ENCODE measurements at regions of chr9 and their contacts with region 1.

Region 1: DNA sequence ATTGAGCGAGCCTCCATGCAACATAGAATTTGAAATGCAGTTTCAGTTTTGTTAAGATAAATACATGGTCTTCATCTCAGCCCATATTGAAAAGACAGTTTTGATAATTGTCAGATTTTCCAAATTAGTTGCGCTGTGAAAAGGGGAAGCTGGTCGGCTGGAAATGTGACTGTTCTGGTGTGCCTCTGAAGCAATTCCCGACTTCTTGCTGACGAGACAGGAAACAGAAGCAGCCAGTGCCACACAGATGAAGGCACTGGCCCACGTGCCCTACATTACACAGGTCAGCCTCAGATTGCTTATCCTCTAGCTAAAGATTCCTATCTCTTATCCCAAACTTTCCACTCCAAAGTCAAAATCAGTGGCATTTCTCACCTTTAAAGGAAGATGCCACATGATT is 214.1 kb upstream of the TLE4 start:
- DNase-seq: no peak
- ATAC-seq: no peak
- H3K4me3 Mint-ChIP-seq: no peak overlapping the region
- H3K27ac Mint-ChIP-seq: no peak overlapping the region
- H3K4me1 Mint-ChIP-seq: peaks cover 3% of the 10 kb centered on the region
- H3K27me3 Mint-ChIP-seq: peaks cover 12% of the 10 kb centered on the region
- CTCF ChIP-seq: no peak

Region 2: DNA sequence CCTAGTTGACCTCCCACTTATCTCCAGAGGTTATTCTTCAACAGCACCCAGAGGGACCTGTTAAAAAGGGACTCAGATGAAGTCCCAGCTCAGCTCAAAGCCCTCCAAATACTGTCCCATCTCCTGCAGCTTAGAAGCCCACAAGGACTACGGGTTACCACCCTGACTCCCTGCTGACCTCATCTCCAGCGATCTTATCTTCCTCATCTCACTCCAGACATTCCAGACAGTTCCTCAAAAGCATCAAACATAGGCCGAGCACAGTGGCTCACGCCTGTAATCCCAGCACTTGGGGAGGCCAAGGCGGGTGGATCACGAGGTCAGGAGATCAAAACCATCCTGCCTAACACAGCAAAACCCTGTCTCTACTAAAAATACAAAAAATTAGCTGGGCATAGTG is 49.6 kb before region 1 on chr9:
- CTCF ChIA-PET with region 1: no interaction called
- POLR2A ChIA-PET with region 1: no interaction called
- intact Hi-C with region 1: loop called (anchors 5 kb)
- DNase-seq: no peak
- ATAC-seq: no peak
- H3K4me3 Mint-ChIP-seq: no peak overlapping the region
- H3K27ac Mint-ChIP-seq: no peak overlapping the region
- H3K4me1 Mint-ChIP-seq: no peaks in the 10 kb centered on the region
- H3K27me3 Mint-ChIP-seq: peaks cover 2% of the 10 kb centered on the region
- CTCF ChIP-seq: no peak

Region 3: GRCh38 chr9:79329861-79330260 is 27.8 kb before region 1 on chr9:
- CTCF ChIA-PET with region 1: no interaction called
- POLR2A ChIA-PET with region 1: no interaction called
- intact Hi-C with region 1: no loop called
- DNase-seq: no peak
- ATAC-seq: no peak
- H3K4me3 Mint-ChIP-seq: no peak overlapping the region
- H3K27ac Mint-ChIP-seq: no peak overlapping the region
- H3K4me1 Mint-ChIP-seq: no peaks in the 10 kb centered on the region
- H3K27me3 Mint-ChIP-seq: no peaks in the 10 kb centered on the region
- CTCF ChIP-seq: no peak

Measured in activated CD8-positive, alpha-beta T cell treated with anti-CD3 and anti-CD28 coated beads for 36 hours (primary cell).